ENCODE measurements at regions of chr7 and their contacts with region 1.

Region 1: GRCh38 chr7:128739048-128739962 is at the start of gene CALU:
- DNase-seq: peak; percentile 98

Region 2: GRCh38 chr7:128728598-128728997 is 10.7 kb before region 1 on chr7:
- CTCF ChIA-PET with region 1: no interaction called
- POLR2A ChIA-PET with region 1: interaction called, 24 read pairs
- DNase-seq: no peak

Region 3: GRCh38 chr7:128755819-128756476 is 16.6 kb after region 1 on chr7:
- CTCF ChIA-PET with region 1: no interaction called
- POLR2A ChIA-PET with region 1: interaction called, 13 read pairs
- DNase-seq: no peak

Region 4: DNA sequence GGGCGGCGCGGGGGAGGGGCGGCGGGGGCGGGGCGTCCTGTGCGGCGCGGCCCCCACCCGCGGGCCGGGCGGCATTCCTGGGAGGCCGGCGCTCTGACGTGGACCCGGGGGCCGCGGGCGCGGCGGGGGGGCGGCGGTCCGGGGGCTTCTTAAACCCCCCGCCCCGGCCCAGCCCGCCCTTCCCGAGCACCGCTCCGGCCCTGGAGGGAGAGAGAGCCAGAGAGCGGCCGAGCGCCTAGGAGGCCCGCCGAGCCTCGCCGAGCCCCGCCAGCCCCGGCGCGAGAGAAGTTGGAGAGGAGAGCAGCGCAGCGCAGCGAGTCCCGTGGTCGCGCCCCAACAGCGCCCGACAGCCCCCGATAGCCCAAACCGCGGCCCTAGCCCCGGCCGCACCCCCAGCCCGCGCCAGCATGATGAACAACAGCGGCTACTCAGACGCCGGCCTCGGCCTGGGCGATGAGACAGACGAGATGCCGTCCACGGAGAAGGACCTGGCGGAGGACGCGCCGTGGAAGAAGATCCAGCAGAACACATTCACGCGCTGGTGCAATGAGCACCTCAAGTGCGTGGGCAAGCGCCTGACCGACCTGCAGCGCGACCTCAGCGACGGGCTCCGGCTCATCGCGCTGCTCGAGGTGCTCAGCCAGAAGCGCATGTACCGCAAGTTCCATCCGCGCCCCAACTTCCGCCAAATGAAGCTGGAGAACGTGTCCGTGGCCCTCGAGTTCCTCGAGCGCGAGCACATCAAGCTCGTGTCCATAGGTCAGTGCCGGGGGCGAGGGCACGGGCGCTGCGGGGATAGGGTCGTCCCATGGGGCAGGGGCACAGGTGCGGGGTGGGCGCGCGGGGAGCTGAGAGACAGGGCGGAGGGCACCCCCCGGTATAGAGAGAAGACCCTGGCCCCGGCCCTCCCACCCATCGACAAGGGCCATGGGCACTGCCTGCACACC is 91.2 kb after region 1 on chr7 and contains the start of gene FLNC:
- CTCF ChIA-PET with region 1: no interaction called
- POLR2A ChIA-PET with region 1: interaction called, 14 read pairs
- DNase-seq: peak; percentile 45

Region 5: GRCh38 chr7:128862571-128863432 is 123.5 kb after region 1 on chr7 and contains the start of gene ATP6V1F:
- CTCF ChIA-PET with region 1: no interaction called
- POLR2A ChIA-PET with region 1: interaction called, 11 read pairs
- DNase-seq: peak; percentile 98

Measured in HEK293T (cell line).